Activated T-helper 1 cell treated with anti-CD3 and anti-CD28 coated beads, Interleukin-12 subunit alpha, Interleukin-12 subunit beta, Interleukin-2, Interleukin-4 antibody, amounts not matched to agents 30 ng/mL and 10 ng/mL and 1 ng/mL, durations not matched to agents 14 hours and 24 hours and 36 hours (primary cell): ENCODE measurements at regions of chr9 and their contacts with region 1.

Region 1: DNA sequence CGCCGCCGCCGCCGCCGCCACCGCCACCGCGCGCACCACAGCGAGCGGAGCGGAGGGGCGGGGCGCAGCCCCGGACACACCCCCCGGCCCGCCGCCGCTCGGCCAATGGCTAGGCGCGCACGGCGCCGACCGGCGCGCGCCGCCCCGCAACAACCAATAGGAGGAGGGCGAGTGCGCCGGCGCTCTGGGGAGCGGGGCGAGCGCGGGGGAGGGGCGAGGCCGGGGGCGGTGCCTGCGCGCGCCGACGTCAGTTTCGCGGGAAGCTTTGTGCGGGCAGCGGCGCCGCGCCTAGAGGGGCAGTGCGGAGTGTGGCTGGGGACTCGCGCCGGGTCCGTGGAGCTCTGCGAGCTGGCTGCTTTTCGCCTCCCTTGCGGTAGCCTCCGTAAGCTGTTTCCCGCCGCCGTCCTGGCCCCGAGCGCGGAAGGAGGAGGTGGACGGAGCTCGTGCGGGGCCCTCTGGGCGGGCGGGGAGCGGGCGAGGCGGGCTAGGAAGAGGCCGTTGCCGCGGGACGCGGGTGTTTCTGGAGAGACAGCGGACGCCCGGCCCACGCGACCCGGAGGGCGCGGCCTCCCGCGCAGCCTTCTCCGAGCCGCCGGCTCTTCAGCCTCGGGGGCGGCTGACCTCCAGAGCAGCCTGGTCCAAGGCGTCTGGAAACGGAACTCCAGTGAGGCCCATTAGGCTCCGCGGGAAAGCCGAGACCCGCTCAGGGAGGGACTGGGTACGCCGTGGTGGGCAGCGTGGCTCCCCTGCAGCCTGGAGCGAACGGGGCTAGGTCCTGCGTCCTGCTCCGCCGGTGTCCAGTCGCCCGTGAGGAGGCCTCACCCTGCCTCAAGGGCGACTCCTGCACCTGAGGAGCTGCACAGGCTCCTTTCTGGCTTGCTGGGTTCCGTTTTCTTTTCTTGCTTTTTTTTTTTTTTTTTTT is at the start of gene ZMYND19:
- DNase-seq: peak; percentile 90
- H3K4me3 Mint-ChIP-seq: peak within 1 kb of the TSS; percentile 99
- H3K27ac Mint-ChIP-seq: peak within 1 kb of the TSS; percentile 97
- H3K4me1 Mint-ChIP-seq: peaks cover 21% of the 10 kb centered on the region
- H3K27me3 Mint-ChIP-seq: peaks cover 1% of the 10 kb centered on the region
- total RNA-seq, gene ZMYND19: 88.2 and 94.9 TPM in 2 replicates

Region 2: DNA sequence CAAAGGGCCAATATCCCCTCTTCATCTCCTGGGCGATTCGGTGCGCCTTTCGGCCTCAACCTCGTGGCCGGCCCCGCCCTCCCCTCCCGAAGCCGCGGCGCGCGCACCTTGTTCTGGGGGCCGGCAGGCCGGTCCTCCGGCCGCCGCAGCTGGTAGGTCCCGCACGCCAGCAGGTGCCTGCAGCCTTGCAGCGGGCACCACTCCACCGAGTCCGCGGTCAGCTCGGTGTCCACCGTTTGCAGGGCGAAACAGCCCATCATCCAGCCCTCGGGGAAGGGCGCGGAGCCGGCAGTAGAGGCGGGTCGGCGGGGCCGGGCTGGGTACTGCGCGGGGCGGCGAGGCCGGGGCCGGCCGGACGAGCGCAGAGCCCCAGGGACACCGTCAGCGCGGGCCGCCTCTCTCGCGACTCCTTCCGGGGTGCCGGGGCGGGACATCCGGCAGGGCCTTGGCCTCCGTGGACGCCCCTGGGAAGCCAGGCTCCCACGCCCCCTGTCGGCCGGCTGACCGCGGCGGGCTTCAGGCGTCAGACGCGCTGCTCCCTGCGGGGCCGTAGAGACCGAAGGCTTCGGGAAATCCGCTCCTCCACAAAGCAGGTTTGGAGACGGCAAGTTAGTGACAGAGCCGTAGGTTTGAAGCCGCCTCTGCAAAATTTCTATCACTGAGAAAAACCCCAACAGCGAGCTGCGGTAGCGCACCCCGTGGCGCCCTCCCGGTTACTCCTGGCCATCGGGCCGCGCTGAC is 12.0 kb before region 1 on chr9 and contains the start of gene DPH7:
- intact Hi-C with region 1: loop called (anchors 1 kb)
- DNase-seq: peak; percentile 93
- H3K4me3 Mint-ChIP-seq: peak within 1 kb of the TSS; percentile 88
- H3K27ac Mint-ChIP-seq: peak within 1 kb of the TSS; percentile 58
- H3K4me1 Mint-ChIP-seq: peaks cover 32% of the 10 kb centered on the region
- H3K27me3 Mint-ChIP-seq: no peaks in the 10 kb centered on the region
- total RNA-seq, gene DPH7: 50.3 and 52.1 TPM in 2 replicates

Region 3: GRCh38 chr9:137605121-137606004 is 14.6 kb after region 1 on chr9 and contains the start of gene ARRDC1:
- intact Hi-C with region 1: loop called (anchors 1 kb)
- DNase-seq: peak; percentile 85
- H3K4me3 Mint-ChIP-seq: peak within 1 kb of the TSS; percentile 85
- H3K27ac Mint-ChIP-seq: peak within 1 kb of the TSS; percentile 74
- H3K4me1 Mint-ChIP-seq: peaks cover 20% of the 10 kb centered on the region
- H3K27me3 Mint-ChIP-seq: peaks cover 6% of the 10 kb centered on the region
- total RNA-seq, gene ARRDC1: 65.7 and 70.3 TPM in 2 replicates